ENCODE measurements at regions of chr6 and their contacts with region 1.

Region 1: DNA sequence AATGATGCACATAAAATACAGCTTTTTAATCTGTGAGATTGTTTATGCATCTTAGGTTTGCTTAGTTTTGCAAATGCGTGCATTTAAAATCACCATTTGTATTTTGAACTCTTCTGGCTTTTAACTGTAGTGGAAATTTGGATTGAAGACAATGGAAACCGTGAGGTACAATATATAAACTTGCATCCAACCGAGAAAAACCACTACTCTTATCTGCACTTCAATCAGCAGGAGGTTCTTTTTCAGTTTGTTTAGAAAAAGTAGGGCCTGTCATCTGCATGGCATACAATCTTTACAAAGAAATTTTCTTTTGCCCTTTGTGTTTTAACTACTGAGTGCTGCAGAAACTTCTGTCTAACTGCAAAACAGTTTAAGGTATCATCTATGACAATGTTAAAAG is 132.8 kb downstream of the LAMA2 start:
- DNase-seq: no peak
- ATAC-seq: no peak
- H3K4me3 ChIP-seq: no peak overlapping the region
- H3K27ac ChIP-seq: no peak overlapping the region
- H3K4me1 ChIP-seq: no peaks in the 10 kb centered on the region
- H3K27me3 ChIP-seq: no peaks in the 10 kb centered on the region
- CTCF ChIP-seq: no peak
- EP300 ChIP-seq: no peak
- POLR2A ChIP-seq: no peak
- RAD21 ChIP-seq: no peak

Region 2: DNA sequence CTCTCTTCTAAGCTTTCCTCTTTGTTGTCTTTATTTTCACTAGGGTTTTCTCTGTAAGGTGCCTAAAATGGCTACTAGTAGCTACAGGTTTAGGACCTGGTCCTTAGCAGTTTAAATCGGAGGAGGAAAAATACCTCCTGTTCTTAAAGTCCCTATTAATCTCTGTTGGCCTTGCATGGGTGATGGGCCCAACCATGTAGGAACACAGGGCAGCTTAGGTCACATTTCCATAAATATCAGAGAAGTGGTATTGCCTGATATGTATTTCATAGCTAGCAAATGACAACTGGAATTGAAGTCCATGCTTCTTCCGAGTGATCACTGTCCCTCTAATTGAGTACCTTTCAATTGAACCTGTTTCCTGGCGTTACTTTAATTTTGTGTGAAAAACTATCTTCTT is 62.8 kb before region 1 on chr6:
- CTCF ChIA-PET with region 1: no interaction called
- POLR2A ChIA-PET with region 1: no interaction called
- in situ Hi-C with region 1: no loop called
- intact Hi-C with region 1: no loop called
- DNase-seq: no peak
- ATAC-seq: no peak
- H3K4me3 ChIP-seq: no peak overlapping the region
- H3K27ac ChIP-seq: no peak overlapping the region
- H3K4me1 ChIP-seq: no peaks in the 10 kb centered on the region
- H3K27me3 ChIP-seq: no peaks in the 10 kb centered on the region
- CTCF ChIP-seq: no peak
- EP300 ChIP-seq: no peak
- POLR2A ChIP-seq: no peak
- RAD21 ChIP-seq: no peak

Region 3: DNA sequence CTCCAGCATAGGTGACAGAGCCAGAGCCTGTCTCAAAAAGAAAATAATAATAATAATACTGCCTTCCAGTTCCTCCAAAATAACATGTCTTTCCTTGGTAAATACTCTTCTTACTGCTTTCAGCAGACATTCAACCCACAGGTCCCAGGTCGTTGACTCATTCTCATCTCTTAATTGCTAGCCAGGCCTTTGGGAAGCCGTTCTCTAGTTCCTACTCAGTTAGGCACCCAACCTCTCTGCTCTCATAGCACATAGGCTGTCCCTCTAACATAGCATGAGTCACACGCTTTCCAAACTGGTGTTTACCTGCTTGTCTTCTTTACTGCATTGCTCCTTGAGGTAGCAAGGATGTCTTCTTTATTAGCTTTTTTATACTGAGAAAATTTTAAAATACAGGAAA is 34.0 kb before region 1 on chr6:
- CTCF ChIA-PET with region 1: no interaction called
- POLR2A ChIA-PET with region 1: no interaction called
- in situ Hi-C with region 1: no loop called
- intact Hi-C with region 1: loop called (anchors 2 kb)
- DNase-seq: no peak
- ATAC-seq: no peak
- H3K4me3 ChIP-seq: no peak overlapping the region
- H3K27ac ChIP-seq: no peak overlapping the region
- H3K4me1 ChIP-seq: no peaks in the 10 kb centered on the region
- H3K27me3 ChIP-seq: no peaks in the 10 kb centered on the region
- CTCF ChIP-seq: no peak
- EP300 ChIP-seq: no peak
- POLR2A ChIP-seq: no peak
- RAD21 ChIP-seq: no peak

Measured in HepG2 (cell line).